ENCODE measurements at regions of chr2 and their contacts with region 1.

Region 1: DNA sequence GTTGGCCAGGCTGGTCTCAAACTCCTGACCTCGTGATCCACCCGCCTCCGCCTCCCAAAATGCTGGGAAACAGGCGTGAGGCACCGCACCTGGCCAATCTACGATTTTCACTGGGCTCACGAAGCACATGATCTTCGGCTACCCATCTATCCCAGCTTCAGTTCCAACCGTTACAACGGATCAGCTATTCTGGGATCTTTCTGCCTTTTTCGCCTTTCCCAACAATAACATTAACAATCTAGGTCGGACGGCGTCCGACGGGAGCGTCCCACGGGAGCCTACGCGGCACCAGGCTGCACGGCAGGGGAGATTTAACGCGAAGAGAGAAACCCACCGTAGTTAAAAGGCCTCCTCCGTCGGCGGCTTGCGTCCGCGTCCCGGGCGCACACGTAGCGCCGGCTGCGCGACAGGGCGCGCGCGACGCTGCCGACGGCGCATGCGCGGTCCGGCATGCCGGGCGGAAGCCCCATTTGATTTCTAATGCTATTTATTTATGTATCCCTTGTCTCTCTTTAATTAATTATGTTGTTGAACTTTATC is at the start of gene MSL3B:
- DNase-seq: no peak
- ATAC-seq: peak; percentile 93
- H3K4me3 ChIP-seq: peak within 1 kb of the TSS; percentile 48 to 78
- H3K27ac ChIP-seq: peak within 1 kb of the TSS; percentile 85
- H3K4me1 ChIP-seq: peaks cover 3% of the 10 kb centered on the region; the same call in 1 of the 2 replicates
- H3K27me3 ChIP-seq: no peaks in the 10 kb centered on the region
- CTCF ChIP-seq: no peak

Region 2: DNA sequence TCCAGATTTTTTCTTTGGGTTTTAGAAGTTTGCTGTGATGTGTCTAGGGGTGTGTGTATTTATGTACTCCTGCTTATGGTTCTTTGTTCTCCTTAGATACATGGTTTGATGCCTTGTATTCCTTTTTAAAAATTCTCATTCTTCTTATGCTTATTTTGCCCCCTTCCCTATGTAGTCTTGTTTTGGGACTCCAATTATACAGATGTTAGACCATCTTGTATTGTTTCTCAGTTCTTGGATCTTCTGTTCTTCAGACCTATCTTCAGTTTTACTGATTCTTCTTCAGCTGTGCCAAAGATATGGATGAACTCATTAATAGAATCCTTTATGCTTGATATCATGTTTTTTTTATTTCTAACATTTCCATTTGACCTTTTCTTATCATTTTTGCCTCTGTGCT is 14.3 kb after region 1 on chr2:
- CTCF ChIA-PET with region 1: interaction called, 12 read pairs
- POLR2A ChIA-PET with region 1: no interaction called
- in situ Hi-C with region 1: no loop called
- intact Hi-C with region 1: no loop called
- DNase-seq: no peak
- ATAC-seq: no peak
- H3K4me3 ChIP-seq: no peak overlapping the region
- H3K27ac ChIP-seq: no peak overlapping the region
- H3K4me1 ChIP-seq: no peaks in the 10 kb centered on the region
- H3K27me3 ChIP-seq: no peaks in the 10 kb centered on the region
- CTCF ChIP-seq: no peak

Region 3: DNA sequence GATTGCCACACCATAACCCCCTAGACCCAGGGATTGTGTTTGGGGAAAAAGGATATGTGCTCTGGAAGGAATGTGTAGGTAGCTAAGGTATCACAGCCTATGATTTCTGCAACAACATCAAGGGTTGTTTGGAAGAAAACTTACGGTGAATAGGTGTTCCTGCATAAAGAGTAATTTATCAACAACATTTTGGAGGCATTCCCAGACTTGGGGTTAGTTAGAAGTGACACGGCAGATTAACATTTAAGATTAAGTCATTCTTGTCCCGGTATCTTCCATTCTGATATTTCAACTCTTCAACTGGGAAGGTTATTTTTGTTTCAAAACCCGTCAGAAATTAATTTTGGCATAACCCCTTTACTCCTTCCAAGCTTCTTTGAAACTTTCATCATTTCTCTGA is 248.0 kb after region 1 on chr2:
- CTCF ChIA-PET with region 1: no interaction called
- POLR2A ChIA-PET with region 1: no interaction called
- in situ Hi-C with region 1: no loop called
- intact Hi-C with region 1: no loop called
- DNase-seq: no peak
- ATAC-seq: no peak
- H3K4me3 ChIP-seq: no peak overlapping the region
- H3K27ac ChIP-seq: peak overlapping the region; percentile 57; the same call in 1 of the 2 replicates
- H3K4me1 ChIP-seq: no peaks in the 10 kb centered on the region
- H3K27me3 ChIP-seq: no peaks in the 10 kb centered on the region
- CTCF ChIP-seq: no peak